HEK293 (cell line): ENCODE measurements at regions of chr11 and their contacts with region 1.

Region 1: DNA sequence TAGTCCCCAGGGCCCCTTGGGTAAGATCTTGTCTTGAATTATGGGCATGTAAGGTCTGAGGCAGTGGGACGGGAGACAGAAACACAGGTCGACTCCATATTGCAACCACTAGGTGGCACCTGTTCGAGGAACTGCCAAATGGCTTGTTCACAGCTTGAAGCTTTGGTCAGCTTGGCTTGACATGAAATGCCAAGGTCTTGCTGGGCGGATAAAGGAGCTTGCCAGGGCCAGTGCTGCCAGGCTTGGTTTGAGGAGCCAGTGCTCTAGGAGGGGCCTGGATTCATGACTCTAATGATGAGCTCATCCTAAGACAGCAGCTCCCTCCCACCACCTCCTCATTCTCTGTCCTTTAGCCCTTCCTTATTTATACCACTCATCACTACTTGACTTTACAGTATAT is 11.9 kb upstream of the NRIP3 start:
- H3K4me3 ChIP-seq: no peak overlapping the region
- H3K27ac ChIP-seq: no peak overlapping the region
- H3K4me1 ChIP-seq: no peaks in the 10 kb centered on the region
- CTCF ChIP-seq: peak; percentile 47; the same call in 1 of the 2 replicates

Region 2: GRCh38 chr11:9003573-9004309 is 11.9 kb before region 1 on chr11 and contains the start of gene NRIP3:
- CTCF ChIA-PET with region 1: interaction called, 18 read pairs
- POLR2A ChIA-PET with region 1: interaction called, 4 read pairs
- H3K4me3 ChIP-seq: peak within 1 kb of the TSS; percentile 51
- H3K27ac ChIP-seq: no peak within 1 kb of the TSS; the same call in 1 of the 2 replicates
- H3K4me1 ChIP-seq: no peaks in the 10 kb centered on the region
- CTCF ChIP-seq: no peak; the same call in 1 of the 2 replicates

Region 3: DNA sequence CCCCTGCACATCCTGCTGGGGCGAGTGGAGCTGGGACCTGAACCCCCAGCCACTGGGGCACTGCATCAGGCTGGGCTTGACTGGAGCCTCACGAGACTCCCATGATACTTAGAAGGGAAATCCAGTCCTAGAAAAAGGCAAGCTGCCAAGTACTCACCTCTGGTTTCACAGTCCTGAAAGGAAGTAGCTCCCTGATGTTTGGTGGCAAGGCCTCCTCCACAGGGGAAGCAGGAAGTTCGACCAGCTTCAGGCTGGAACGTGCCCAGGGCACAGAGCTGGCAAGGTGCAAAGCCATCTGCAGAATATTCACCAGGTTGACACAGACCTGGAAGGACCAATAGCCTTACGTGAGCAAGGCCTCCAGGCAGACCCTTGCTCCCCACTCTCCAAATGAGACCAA is 14.9 kb after region 1 on chr11:
- CTCF ChIA-PET with region 1: interaction called, 29 read pairs
- POLR2A ChIA-PET with region 1: no interaction called
- H3K4me3 ChIP-seq: no peak overlapping the region
- H3K27ac ChIP-seq: no peak overlapping the region
- H3K4me1 ChIP-seq: no peaks in the 10 kb centered on the region
- CTCF ChIP-seq: no peak

Region 4: GRCh38 chr11:9038541-9038940 is 22.9 kb after region 1 on chr11:
- CTCF ChIA-PET with region 1: interaction called, 19 read pairs
- POLR2A ChIA-PET with region 1: no interaction called
- H3K4me3 ChIP-seq: no peak overlapping the region
- H3K27ac ChIP-seq: no peak overlapping the region
- H3K4me1 ChIP-seq: no peaks in the 10 kb centered on the region
- CTCF ChIP-seq: no peak

Region 5: DNA sequence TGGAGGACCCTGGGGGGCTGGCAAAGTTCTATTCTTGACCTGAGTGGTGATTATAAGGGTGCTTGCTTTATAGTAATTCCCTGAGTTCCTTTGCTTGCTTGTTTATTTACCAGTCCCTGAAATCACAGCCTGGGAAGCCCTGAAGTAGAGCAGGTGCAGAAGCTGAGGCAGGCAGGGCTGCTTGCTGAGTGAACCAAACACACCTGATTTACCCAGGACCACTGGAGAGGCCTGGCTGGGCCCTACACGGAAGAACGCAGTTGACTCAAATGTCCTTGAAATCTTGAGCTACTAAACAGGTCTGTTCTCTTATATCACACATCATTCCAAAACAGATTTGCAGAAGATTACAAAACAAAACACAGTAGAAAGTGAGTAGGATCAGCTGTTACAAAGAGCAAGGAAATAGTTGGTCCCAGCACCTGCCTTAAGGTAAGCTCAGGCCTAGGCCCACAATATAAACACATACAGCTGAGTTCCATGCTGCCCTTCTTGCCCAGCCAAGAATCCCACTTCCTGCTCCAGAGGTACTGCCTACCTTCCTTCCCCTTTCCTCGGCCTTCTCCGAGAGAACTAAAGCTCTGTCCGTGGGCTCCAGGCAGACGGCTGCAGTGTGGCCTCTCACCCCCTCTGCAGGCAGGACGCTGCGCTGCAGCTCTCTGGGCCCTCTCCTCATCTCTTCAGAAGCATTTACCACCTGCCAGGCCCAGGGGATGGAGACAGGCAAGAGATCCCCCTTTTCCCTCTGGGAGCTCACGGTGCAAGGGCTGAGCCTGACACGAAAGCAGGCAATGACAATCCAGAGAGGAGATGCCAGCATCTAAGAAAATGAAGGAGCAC is 121.8 kb after region 1 on chr11:
- CTCF ChIA-PET with region 1: interaction called, 78 read pairs
- POLR2A ChIA-PET with region 1: interaction called, 3 read pairs
- H3K4me3 ChIP-seq: no peak overlapping the region
- H3K27ac ChIP-seq: no peak overlapping the region
- H3K4me1 ChIP-seq: peaks cover 15% of the 10 kb centered on the region
- CTCF ChIP-seq: peak; percentile 64

Region 6: GRCh38 chr11:9506489-9507276 is 491.0 kb after region 1 on chr11:
- CTCF ChIA-PET with region 1: interaction called, 21 read pairs
- POLR2A ChIA-PET with region 1: no interaction called
- H3K4me3 ChIP-seq: no peak overlapping the region
- H3K27ac ChIP-seq: no peak overlapping the region
- H3K4me1 ChIP-seq: no peaks in the 10 kb centered on the region
- CTCF ChIP-seq: peak; percentile 48; the same call in 1 of the 2 replicates